ENCODE measurements at regions of chr1 and their contacts with region 1.

Region 1: GRCh38 chr1:103461161-103462105 is 64.1 kb upstream of the RNPC3 start:
- DNase-seq: no peak
- ATAC-seq: no peak
- H3K4me3 Mint-ChIP-seq: no peak overlapping the region
- H3K27ac Mint-ChIP-seq: no peak overlapping the region
- H3K4me1 Mint-ChIP-seq: peaks cover 11% of the 10 kb centered on the region
- H3K27me3 Mint-ChIP-seq: no peaks in the 10 kb centered on the region
- CTCF ChIP-seq: no peak; the same call in 1 of the 2 replicates

Region 2: DNA sequence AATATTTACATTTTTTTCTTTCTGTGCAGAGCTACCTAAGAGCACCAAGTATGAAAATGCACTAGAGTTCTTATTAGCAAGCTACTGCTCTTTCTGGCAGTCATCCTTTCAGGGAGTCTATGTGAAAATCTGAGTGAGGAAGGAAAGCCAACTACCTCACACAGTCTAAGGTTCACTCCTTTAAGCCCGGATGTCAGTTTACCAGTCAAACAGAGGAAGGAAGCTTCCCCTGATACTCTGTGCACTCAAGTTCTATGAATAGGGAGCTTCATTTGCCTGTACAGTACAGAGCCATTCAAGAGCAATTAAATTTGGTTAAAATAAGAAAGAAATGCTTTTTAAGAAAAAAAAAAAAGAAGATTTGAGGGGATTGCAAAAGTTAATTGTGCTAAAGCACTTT is 360.0 kb before region 1 on chr1:
- CTCF ChIA-PET with region 1: interaction called, 106 read pairs
- POLR2A ChIA-PET with region 1: no interaction called
- DNase-seq: no peak
- ATAC-seq: peak; percentile 56; the same call in 1 of the 2 replicates
- H3K4me3 Mint-ChIP-seq: no peak overlapping the region
- H3K27ac Mint-ChIP-seq: no peak overlapping the region
- H3K4me1 Mint-ChIP-seq: peaks cover 11% of the 10 kb centered on the region
- H3K27me3 Mint-ChIP-seq: no peaks in the 10 kb centered on the region
- CTCF ChIP-seq: no peak

Region 3: GRCh38 chr1:103106426-103107341 is 354.7 kb before region 1 on chr1:
- CTCF ChIA-PET with region 1: interaction called, 106 read pairs
- POLR2A ChIA-PET with region 1: no interaction called
- DNase-seq: peak; percentile 40
- ATAC-seq: peak; percentile 14
- H3K4me3 Mint-ChIP-seq: peak overlapping the region; percentile 82
- H3K27ac Mint-ChIP-seq: no peak overlapping the region
- H3K4me1 Mint-ChIP-seq: peaks cover 26% of the 10 kb centered on the region
- H3K27me3 Mint-ChIP-seq: peaks cover 6% of the 10 kb centered on the region
- CTCF ChIP-seq: peak; percentile 34; the same call in 1 of the 2 replicates

Region 4: GRCh38 chr1:103441342-103441741 is 20.1 kb before region 1 on chr1:
- CTCF ChIA-PET with region 1: interaction called, 12 read pairs
- POLR2A ChIA-PET with region 1: no interaction called
- DNase-seq: no peak
- ATAC-seq: peak; percentile 86
- H3K4me3 Mint-ChIP-seq: no peak overlapping the region
- H3K27ac Mint-ChIP-seq: peak overlapping the region; percentile 74
- H3K4me1 Mint-ChIP-seq: peaks cover 33% of the 10 kb centered on the region
- H3K27me3 Mint-ChIP-seq: no peaks in the 10 kb centered on the region
- CTCF ChIP-seq: no peak

Region 5: GRCh38 chr1:103448560-103448959 is 12.9 kb before region 1 on chr1:
- CTCF ChIA-PET with region 1: interaction called, 13 read pairs
- POLR2A ChIA-PET with region 1: no interaction called
- DNase-seq: no peak
- ATAC-seq: no peak
- H3K4me3 Mint-ChIP-seq: no peak overlapping the region
- H3K27ac Mint-ChIP-seq: no peak overlapping the region
- H3K4me1 Mint-ChIP-seq: no peaks in the 10 kb centered on the region
- H3K27me3 Mint-ChIP-seq: no peaks in the 10 kb centered on the region
- CTCF ChIP-seq: no peak

Region 6: DNA sequence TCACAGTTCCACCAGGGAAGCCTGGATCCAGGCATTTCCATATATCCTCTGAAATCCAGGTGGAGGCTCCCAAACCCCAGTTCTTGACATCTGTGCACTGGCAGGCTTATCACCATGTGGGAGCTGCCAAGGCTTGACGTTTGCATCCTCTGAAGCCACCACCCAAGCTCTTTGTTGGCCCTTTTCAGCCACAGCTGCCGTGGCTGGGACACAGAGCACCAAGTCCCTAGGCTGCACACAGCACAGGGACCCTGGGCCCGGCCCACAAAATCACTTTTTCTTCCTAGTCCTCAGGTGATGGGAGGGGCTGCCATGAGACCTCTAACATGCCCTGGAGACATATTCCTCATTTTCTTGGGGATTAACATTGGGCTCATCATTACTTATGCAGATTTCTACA is 86.4 kb after region 1 on chr1:
- CTCF ChIA-PET with region 1: no interaction called
- POLR2A ChIA-PET with region 1: no interaction called
- DNase-seq: no peak
- ATAC-seq: no peak
- H3K4me3 Mint-ChIP-seq: no peak overlapping the region
- H3K27ac Mint-ChIP-seq: no peak overlapping the region
- H3K4me1 Mint-ChIP-seq: no peaks in the 10 kb centered on the region
- H3K27me3 Mint-ChIP-seq: no peaks in the 10 kb centered on the region
- CTCF ChIP-seq: no peak

Measured in WTC11 (cell line).